Caco-2 (cell line): ENCODE measurements at regions of chr3 and their contacts with region 1.

Region 1: DNA sequence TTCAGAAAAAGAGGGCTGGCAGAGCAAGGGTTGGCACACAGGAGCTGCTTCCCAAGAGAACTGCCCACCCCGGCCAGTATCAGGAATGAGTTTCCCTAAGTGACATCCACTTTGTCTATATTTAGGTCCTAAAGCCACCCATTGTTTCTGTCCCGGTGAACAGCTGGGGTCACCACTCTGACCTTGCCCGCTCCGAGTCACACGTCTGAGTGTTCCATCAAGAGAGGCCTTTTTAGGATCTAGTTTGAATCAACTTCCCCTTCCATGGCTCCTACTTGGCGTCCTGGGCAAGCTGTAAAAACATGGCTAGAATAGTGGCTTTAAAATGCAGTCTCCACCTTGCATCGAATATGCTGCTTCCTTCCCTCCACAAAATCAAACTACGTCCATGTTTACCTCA is 109.6 kb upstream of the ARHGEF3 start:
- DNase-seq: no peak
- H3K4me3 ChIP-seq: no peak overlapping the region
- H3K4me3 Mint-ChIP-seq: no peak overlapping the region
- H3K27ac Mint-ChIP-seq: no peak overlapping the region
- H3K4me1 ChIP-seq: no peaks in the 10 kb centered on the region
- H3K4me1 Mint-ChIP-seq: no peaks in the 10 kb centered on the region
- H3K27me3 ChIP-seq: no peaks in the 10 kb centered on the region
- H3K27me3 Mint-ChIP-seq: no peaks in the 10 kb centered on the region
- CTCF ChIP-seq: no peak

Region 2: DNA sequence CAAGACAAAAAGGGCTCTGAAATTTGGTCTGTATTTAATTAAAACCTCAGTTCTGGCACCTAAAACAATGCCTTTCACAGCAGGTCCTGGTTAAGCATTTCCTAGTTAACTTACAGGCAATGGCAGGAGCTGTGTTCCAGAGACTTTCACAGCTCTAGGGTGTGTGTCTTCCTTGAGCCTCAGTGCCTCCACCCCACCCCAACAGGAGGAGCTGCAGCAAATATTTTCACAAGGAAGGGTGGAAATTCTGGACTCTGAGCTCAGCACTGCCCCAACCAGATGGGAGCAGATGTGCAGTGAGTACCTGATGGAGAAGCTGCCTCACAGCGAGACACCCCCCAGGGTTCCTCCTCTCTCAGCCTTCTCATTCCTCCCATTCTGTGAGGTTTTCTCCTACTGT is 42.8 kb after region 1 on chr3:
- CTCF ChIA-PET with region 1: no interaction called
- POLR2A ChIA-PET with region 1: no interaction called
- intact Hi-C with region 1: loop called (anchors 1 kb)
- DNase-seq: peak in 1 of 2 experiments; percentile 16
- H3K4me3 ChIP-seq: no peak overlapping the region
- H3K4me3 Mint-ChIP-seq: no peak overlapping the region
- H3K27ac Mint-ChIP-seq: no peak overlapping the region
- H3K4me1 ChIP-seq: peaks cover 7% of the 10 kb centered on the region; the same call in 1 of the 2 replicates
- H3K4me1 Mint-ChIP-seq: peaks cover 11% of the 10 kb centered on the region
- H3K27me3 ChIP-seq: no peaks in the 10 kb centered on the region
- H3K27me3 Mint-ChIP-seq: no peaks in the 10 kb centered on the region
- CTCF ChIP-seq: peak in 1 of 2 experiments; percentile 18